ENCODE measurements at regions of chr18 and their contacts with region 1.

Region 1: DNA sequence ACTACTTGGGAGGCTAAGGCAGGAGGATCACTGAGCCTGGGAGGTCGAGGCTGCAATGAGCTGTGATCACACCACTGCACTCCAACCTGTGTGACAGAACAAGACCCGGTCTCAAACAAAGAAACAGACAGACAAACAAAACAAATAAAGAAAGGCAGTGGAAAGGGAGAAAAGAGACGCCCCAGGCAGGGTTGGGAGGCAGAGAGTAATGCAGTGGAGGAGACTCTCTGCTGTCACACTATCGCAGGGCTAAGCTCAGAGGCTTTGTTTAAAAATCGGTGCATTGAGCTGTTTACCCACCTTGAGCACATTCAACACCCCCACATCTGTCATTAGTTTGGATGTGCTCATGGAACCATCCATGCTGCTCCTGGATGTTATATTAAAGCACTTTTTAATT is 84.2 kb upstream of the RMP24 start:
- DNase-seq: no peak
- H3K4me3 ChIP-seq: no peak overlapping the region
- H3K27ac ChIP-seq: no peak overlapping the region
- H3K4me1 ChIP-seq: no peaks in the 10 kb centered on the region
- H3K27me3 ChIP-seq: no peaks in the 10 kb centered on the region
- CTCF ChIP-seq: no peak
- POLR2A ChIP-seq: no peak

Region 2: DNA sequence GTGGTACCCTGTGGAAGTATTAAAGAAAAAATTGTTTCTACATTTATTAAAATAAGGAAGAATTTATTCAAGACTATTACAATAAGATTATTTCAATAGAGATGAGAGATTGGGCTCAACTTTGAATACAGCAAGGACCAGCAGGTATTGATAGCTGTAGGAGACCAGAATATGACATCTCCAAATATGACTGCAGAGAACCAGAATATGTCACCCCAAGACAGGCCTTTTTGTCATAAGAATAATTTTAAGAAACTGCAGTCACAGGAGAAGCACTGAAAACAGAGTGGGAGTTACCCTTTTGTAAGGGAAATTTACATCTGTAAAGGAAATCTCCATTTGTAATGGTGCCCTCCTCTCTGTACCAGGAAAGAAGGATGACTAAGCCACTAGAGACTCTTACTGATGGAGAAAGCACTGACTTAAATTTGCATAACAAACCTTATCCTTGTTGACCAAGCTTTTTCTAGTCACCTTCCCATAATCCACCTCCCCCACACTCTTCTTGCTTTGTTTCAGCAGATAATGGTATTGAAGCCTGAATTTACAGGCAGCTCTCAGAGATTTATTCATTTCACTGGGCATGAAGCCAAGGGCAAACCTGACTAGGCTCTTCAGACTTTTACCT is 60.9 kb before region 1 on chr18:
- intact Hi-C with region 1: loop called (anchors 10 kb)
- DNase-seq: no peak
- H3K4me3 ChIP-seq: no peak overlapping the region
- H3K27ac ChIP-seq: no peak overlapping the region
- H3K4me1 ChIP-seq: no peaks in the 10 kb centered on the region
- H3K27me3 ChIP-seq: no peaks in the 10 kb centered on the region
- CTCF ChIP-seq: no peak
- POLR2A ChIP-seq: no peak

Measured in prostate gland (tissue), 2 donors.